Activated CD4-positive, alpha-beta memory T cell treated with anti-CD3 and anti-CD28 coated beads, Interleukin-2, amount 10 ng/mL, durations not matched to agents 7 days and 5 days (primary cell): ENCODE measurements at regions of chr7 and their contacts with region 1.

Region 1: DNA sequence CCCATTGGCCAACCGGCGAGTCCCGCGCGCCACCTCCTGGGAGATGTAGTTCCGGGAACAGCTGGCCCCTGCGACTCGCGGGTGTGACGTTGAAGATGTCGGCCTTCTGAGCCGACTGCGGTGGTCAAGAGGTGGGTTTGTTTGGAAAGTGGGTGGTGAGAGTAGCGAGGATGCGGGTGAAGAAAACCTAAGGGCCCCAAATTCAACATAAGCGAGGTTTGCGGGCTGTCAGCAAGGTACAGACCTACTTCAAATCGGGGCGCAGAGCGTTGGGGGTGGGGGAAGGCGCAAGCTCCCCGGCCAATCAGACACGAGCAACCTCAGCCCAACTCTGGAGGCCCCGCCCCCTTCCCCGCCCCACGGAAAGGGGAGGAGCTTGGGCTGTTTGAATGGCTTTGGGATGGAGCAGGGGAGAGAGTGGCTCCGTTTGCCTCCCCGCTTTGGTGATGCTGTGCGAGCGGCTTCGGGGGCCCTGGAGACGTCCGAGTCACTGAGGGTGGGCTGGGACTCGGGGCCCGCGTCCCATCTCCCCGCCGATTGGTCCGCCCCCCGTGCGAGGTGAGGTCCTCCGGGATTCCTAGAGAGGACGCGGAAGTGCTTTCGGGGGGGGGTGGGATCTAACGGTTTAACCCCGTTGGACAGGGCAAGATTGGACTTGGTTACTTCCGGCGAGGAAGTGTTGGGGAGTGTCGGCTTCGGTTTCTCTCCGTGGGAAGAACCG is at the start of gene ZKSCAN5:
- DNase-seq: peak; percentile 97
- H3K4me3 Mint-ChIP-seq: peak within 1 kb of the TSS; percentile 88
- H3K27ac Mint-ChIP-seq: peak within 1 kb of the TSS; percentile 96
- H3K4me1 Mint-ChIP-seq: peaks cover 33% of the 10 kb centered on the region
- H3K27me3 Mint-ChIP-seq: no peaks in the 10 kb centered on the region
- total RNA-seq, gene ZKSCAN5: 12.0 to 12.2 TPM

Region 2: GRCh38 chr7:99408379-99409191 is 96.2 kb before region 1 on chr7 and contains the starts of genes BUD31 and PDAP1:
- CTCF ChIA-PET with region 1: no interaction called
- POLR2A ChIA-PET with region 1: interaction called, 21 read pairs
- DNase-seq: peak; percentile 95
- H3K4me3 Mint-ChIP-seq: peak within 1 kb of the TSS; percentile 86
- H3K27ac Mint-ChIP-seq: peak within 1 kb of the TSS; percentile 90
- H3K4me1 Mint-ChIP-seq: peaks cover 58% of the 10 kb centered on the region
- H3K27me3 Mint-ChIP-seq: no peaks in the 10 kb centered on the region
- total RNA-seq, gene BUD31: 104 to 106 TPM
- total RNA-seq, gene PDAP1: 93.8 to 103 TPM

Region 3: DNA sequence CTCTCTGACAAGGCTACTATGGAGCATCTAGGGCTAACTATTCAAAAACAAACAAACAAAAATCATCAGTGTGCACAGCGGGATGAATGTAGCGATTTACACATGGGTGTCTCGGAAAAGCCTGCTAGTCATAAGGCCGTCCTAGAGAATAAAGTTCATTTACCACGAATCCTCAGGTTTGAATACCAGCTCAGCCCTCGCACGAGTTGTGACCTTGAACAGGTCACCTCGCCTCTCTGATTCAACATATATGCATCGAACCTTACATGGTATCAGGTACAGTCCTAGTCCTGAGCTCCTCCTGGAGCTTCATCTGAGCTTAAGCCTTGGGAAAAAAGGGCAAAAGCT is 39.4 kb before region 1 on chr7:
- CTCF ChIA-PET with region 1: no interaction called
- POLR2A ChIA-PET with region 1: interaction called, 19 read pairs
- DNase-seq: no peak
- H3K4me3 Mint-ChIP-seq: peak overlapping the region; percentile 86
- H3K27ac Mint-ChIP-seq: peak overlapping the region; percentile 73
- H3K4me1 Mint-ChIP-seq: peaks cover 30% of the 10 kb centered on the region
- H3K27me3 Mint-ChIP-seq: no peaks in the 10 kb centered on the region

Region 4: GRCh38 chr7:99551767-99552463 is 47.2 kb after region 1 on chr7 and contains the start of gene FAM200A:
- CTCF ChIA-PET with region 1: interaction called, 4 read pairs
- POLR2A ChIA-PET with region 1: interaction called, 79 read pairs
- DNase-seq: peak; percentile 86
- H3K4me3 Mint-ChIP-seq: peak within 1 kb of the TSS; percentile 79
- H3K27ac Mint-ChIP-seq: peak within 1 kb of the TSS; percentile 48
- H3K4me1 Mint-ChIP-seq: peaks cover 28% of the 10 kb centered on the region
- H3K27me3 Mint-ChIP-seq: no peaks in the 10 kb centered on the region
- total RNA-seq, gene FAM200A: 5.0 to 5.1 TPM

Region 5: DNA sequence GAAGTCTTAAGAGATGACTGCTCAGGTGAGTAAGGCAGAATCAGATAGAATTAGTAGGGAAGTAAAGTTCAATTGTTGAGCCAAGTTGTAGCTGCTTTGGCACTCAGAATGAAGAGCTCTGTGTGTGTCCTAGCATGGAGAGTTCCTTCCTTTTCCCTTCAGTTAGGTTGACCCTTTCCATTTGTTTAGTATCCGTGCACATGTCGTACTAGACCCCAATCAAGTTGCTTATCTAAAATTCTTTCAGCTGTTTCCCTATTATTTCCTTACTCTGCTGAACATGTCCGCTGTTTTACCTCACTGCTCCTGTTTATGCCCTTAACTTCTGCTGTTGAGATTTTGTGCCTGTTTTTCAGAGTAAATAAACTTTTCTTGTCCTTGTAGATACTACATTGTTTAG is 67.0 kb after region 1 on chr7:
- CTCF ChIA-PET with region 1: no interaction called
- POLR2A ChIA-PET with region 1: no interaction called
- DNase-seq: no peak
- H3K4me3 Mint-ChIP-seq: no peak overlapping the region
- H3K27ac Mint-ChIP-seq: no peak overlapping the region
- H3K4me1 Mint-ChIP-seq: no peaks in the 10 kb centered on the region
- H3K27me3 Mint-ChIP-seq: no peaks in the 10 kb centered on the region

Region 6: DNA sequence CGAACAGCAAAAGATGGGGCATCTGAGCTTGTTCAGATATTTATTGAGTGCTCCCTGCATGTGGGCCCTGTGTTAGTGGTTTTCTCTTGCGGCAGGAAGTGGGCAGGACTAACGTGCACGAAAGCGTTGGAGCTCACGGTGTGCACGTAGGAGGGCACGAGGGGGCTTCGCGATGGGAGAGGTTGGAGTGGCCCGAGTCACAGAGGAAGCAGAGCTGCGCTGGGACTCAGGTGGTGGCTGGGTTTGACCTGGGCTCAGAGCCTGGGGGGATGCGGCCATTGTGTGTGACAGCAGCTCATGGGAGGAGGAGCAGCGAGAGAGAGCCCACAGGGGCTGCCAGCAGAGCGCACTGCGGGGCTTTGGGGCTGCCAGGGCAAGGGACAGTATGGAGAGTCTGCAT is 119.7 kb after region 1 on chr7:
- CTCF ChIA-PET with region 1: no interaction called
- POLR2A ChIA-PET with region 1: interaction called, 10 read pairs
- DNase-seq: peak; percentile 83
- H3K4me3 Mint-ChIP-seq: peak overlapping the region; percentile 73
- H3K27ac Mint-ChIP-seq: peak overlapping the region; percentile 85
- H3K4me1 Mint-ChIP-seq: peaks cover 56% of the 10 kb centered on the region
- H3K27me3 Mint-ChIP-seq: no peaks in the 10 kb centered on the region